A673 (cell line): ENCODE measurements at regions of chr6 and their contacts with region 1.

Region 1: GRCh38 chr6:153231048-153231646 is 100.1 kb upstream of the RGS17 start:
- DNase-seq: peak; percentile 80
- H3K4me3 ChIP-seq: no peak overlapping the region
- H3K27ac ChIP-seq: no peak overlapping the region
- H3K4me1 ChIP-seq: peaks cover 5% of the 10 kb centered on the region
- H3K27me3 ChIP-seq: no peaks in the 10 kb centered on the region
- CTCF ChIP-seq: peak; percentile 98

Region 2: DNA sequence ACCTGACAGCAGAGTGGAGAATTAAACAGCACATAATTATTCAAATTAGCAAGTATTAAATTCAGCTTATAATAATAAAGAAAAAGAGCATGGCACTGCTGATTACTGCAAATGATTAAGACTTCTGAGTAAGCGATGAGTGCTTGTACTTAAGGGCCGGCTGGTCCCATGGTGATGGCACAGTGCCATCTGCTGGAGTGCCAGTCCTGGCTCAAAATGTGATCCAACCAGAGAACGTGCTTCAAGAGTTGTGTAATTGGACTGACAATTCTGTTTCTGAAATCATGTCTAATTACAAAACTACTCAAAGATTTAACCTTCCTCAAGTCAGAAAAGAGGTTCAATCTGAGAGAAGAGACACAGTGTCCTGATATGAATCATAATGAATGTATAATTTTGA is 81.5 kb after region 1 on chr6:
- CTCF ChIA-PET with region 1: interaction called, 8 read pairs
- POLR2A ChIA-PET with region 1: no interaction called
- intact Hi-C with region 1: loop called (anchors 1 kb)
- DNase-seq: peak; percentile 86
- H3K4me3 ChIP-seq: no peak overlapping the region
- H3K27ac ChIP-seq: peak overlapping the region; percentile 22
- H3K4me1 ChIP-seq: peaks cover 52% of the 10 kb centered on the region
- H3K27me3 ChIP-seq: no peaks in the 10 kb centered on the region
- CTCF ChIP-seq: peak; percentile 78

Region 3: GRCh38 chr6:153511896-153512496 is 280.8 kb after region 1 on chr6:
- CTCF ChIA-PET with region 1: no interaction called
- POLR2A ChIA-PET with region 1: no interaction called
- intact Hi-C with region 1: loop called (anchors 2 kb)
- DNase-seq: peak; percentile 69
- H3K4me3 ChIP-seq: no peak overlapping the region
- H3K27ac ChIP-seq: no peak overlapping the region
- H3K4me1 ChIP-seq: no peaks in the 10 kb centered on the region
- H3K27me3 ChIP-seq: no peaks in the 10 kb centered on the region
- CTCF ChIP-seq: peak; percentile 65

Region 4: DNA sequence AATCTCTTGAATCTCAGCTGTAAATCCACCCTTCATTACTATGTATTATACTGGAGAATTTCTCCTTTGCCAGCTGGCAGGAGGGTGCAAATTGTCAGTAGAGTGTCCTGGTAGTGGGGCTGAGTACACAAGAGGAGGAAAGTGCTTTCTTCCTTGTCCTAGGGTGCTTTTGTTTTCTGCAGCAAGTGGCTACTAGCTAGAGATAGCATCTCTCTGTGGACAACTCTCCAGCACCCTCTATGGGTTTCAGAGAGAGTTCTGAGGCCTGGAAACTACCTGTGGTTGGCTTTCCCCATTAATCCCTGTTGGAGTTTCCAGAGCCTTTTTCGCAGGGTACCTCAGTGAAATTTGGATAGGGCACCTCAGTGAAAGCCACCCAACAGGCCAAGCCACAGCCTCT is 322.5 kb after region 1 on chr6:
- CTCF ChIA-PET with region 1: interaction called, 5 read pairs
- POLR2A ChIA-PET with region 1: no interaction called
- intact Hi-C with region 1: loop called (anchors 2 kb)
- DNase-seq: peak; percentile 76
- H3K4me3 ChIP-seq: no peak overlapping the region
- H3K27ac ChIP-seq: no peak overlapping the region
- H3K4me1 ChIP-seq: peaks cover 6% of the 10 kb centered on the region
- H3K27me3 ChIP-seq: no peaks in the 10 kb centered on the region
- CTCF ChIP-seq: peak; percentile 73

Region 5: DNA sequence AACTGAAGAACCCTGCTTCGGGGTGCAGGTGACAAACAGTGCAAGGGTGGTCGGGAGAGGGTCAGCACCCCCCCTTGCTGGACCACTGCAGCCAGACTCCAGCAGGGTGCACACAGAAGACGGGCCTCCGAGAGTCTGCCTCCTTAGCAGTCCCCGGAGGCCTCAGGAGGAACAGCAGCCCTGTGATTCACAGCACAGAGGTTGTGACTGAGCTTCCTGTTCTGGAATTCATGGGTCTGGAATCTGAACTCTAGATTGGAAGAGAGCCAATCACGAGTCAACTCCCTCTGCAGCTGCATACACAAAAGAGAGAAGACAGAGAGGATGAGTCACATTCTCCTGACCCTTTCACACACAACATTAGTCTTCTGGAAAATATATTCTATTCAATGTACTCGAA is 558.9 kb after region 1 on chr6:
- CTCF ChIA-PET with region 1: no interaction called
- POLR2A ChIA-PET with region 1: no interaction called
- intact Hi-C with region 1: loop called (anchors 2 kb)
- DNase-seq: peak; percentile 77
- H3K4me3 ChIP-seq: no peak overlapping the region
- H3K27ac ChIP-seq: no peak overlapping the region
- H3K4me1 ChIP-seq: peaks cover 4% of the 10 kb centered on the region
- H3K27me3 ChIP-seq: no peaks in the 10 kb centered on the region
- CTCF ChIP-seq: 0 out of 2 replicates have a peak, but pooled peaks have one; percentile 23

Region 6: GRCh38 chr6:153947808-153948447 is 716.8 kb after region 1 on chr6:
- CTCF ChIA-PET with region 1: interaction called, 3 read pairs
- POLR2A ChIA-PET with region 1: interaction called, 4 read pairs
- intact Hi-C with region 1: loop called (anchors 2 kb)
- DNase-seq: peak; percentile 60
- H3K4me3 ChIP-seq: no peak overlapping the region
- H3K27ac ChIP-seq: no peak overlapping the region
- H3K4me1 ChIP-seq: no peaks in the 10 kb centered on the region
- H3K27me3 ChIP-seq: no peaks in the 10 kb centered on the region
- CTCF ChIP-seq: peak; percentile 96